ENCODE measurements at regions of chr5 and their contacts with region 1.

Region 1: GRCh38 chr5:140710899-140711552 is 10.8 kb downstream of the ZMAT2 start:
- DNase-seq: peak; percentile 93
- H3K4me3 Mint-ChIP-seq: peak overlapping the region; percentile 89
- H3K27ac Mint-ChIP-seq: peak overlapping the region; percentile 89
- H3K4me1 Mint-ChIP-seq: peaks cover 12% of the 10 kb centered on the region
- H3K27me3 Mint-ChIP-seq: no peaks in the 10 kb centered on the region

Region 2: DNA sequence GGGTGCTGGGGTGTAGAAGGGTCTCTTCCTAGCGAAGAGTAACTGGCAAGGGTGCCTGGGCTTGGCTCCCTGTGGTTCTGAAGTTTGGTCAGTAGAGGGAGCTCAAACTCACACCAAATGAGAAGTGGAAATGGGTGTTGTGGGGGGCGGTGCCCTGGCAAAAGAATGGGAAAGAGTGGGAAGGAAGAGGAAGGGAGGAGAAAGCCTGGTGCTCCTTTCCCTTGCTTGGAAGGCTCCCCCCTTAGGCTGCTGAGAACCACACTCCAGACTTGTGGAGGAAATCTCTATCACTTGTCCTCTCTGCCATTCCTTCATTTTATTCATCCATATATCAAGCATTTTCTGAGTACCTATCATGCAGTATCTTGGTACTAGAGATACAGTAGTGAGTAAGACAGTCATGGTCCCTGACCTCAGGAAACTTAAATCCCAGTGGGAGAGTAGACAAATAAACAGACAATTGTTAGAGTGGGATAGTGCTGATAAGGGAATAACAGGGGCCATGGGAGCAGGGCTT is 338.0 kb before region 1 on chr5:
- CTCF ChIA-PET with region 1: interaction called, 10 read pairs
- POLR2A ChIA-PET with region 1: no interaction called
- intact Hi-C with region 1: no loop called
- DNase-seq: peak; percentile 48
- H3K4me3 Mint-ChIP-seq: no peak overlapping the region
- H3K27ac Mint-ChIP-seq: no peak overlapping the region
- H3K4me1 Mint-ChIP-seq: peaks cover 3% of the 10 kb centered on the region
- H3K27me3 Mint-ChIP-seq: no peaks in the 10 kb centered on the region

Region 3: DNA sequence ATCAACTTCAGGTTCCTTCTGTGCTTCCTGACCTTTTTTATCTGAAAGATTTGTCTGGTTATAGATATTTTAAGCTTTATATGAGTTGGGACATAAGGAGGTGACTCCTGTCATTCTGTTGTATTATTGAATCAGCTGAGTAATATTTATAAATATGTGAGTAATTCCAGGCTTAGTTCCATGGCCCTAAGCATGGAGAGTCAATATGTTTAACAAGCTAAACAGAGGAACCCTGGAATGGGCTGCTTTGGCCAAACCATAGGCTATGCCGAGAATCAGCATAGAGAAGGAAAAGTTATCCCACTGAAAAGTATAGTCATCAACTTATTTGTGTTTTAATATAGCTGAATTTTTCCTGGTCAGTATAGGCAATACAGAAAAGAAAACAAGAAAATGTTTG is 170.8 kb before region 1 on chr5:
- CTCF ChIA-PET with region 1: no interaction called
- POLR2A ChIA-PET with region 1: no interaction called
- intact Hi-C with region 1: no loop called
- DNase-seq: no peak
- H3K4me3 Mint-ChIP-seq: no peak overlapping the region
- H3K27ac Mint-ChIP-seq: no peak overlapping the region
- H3K4me1 Mint-ChIP-seq: peaks cover 2% of the 10 kb centered on the region
- H3K27me3 Mint-ChIP-seq: no peaks in the 10 kb centered on the region

Region 4: DNA sequence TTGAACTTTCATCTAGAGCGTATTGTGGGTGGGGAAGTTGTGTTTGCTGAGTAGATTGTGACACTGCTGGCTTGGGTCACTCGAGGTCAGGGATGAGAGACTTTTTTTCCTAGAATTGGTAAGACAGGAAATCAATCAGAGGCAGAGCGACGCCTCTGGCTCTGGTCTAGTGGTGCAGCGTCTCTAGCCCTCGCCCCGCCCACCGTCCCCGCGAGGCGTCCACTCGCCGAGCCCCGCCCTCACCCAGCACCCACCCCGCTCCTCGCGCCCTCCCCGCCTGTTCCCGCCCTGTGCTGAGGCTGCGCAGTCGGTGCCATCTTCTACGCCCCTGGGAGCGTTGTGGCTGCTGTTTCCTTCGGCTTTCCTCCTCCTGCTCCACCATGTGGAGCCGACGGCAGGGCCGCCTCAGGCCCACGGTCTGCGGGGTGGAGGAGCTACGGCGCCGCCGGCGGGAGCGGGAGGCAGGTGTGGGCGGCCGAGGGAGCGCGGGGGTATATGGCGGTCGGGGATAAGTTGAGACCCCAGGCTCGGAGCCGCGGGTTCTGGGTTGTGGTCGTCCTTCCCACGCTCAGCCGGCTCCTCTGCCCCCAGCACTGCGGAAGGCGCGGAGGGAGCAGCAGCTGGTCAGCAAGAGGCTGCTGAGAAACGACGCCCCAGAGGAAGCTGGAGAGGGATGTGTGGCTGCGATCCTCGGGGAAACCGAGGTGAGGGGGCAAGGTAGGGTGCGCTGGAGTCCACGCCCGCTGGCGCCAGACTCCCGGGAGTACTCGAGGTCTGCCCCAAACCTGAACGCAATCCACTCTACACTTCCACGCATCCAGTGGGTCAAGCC is 71.7 kb before region 1 on chr5 and contains the start of gene TMCO6:
- CTCF ChIA-PET with region 1: interaction called, 3 read pairs
- POLR2A ChIA-PET with region 1: no interaction called
- intact Hi-C with region 1: loop called (anchors 1 kb)
- DNase-seq: peak; percentile 99
- H3K4me3 Mint-ChIP-seq: peak within 1 kb of the TSS; percentile 85
- H3K27ac Mint-ChIP-seq: peak within 1 kb of the TSS; percentile 94
- H3K4me1 Mint-ChIP-seq: peaks cover 41% of the 10 kb centered on the region
- H3K27me3 Mint-ChIP-seq: no peaks in the 10 kb centered on the region
- total RNA-seq, gene TMCO6: 33.7 to 33.8 TPM

Region 5: DNA sequence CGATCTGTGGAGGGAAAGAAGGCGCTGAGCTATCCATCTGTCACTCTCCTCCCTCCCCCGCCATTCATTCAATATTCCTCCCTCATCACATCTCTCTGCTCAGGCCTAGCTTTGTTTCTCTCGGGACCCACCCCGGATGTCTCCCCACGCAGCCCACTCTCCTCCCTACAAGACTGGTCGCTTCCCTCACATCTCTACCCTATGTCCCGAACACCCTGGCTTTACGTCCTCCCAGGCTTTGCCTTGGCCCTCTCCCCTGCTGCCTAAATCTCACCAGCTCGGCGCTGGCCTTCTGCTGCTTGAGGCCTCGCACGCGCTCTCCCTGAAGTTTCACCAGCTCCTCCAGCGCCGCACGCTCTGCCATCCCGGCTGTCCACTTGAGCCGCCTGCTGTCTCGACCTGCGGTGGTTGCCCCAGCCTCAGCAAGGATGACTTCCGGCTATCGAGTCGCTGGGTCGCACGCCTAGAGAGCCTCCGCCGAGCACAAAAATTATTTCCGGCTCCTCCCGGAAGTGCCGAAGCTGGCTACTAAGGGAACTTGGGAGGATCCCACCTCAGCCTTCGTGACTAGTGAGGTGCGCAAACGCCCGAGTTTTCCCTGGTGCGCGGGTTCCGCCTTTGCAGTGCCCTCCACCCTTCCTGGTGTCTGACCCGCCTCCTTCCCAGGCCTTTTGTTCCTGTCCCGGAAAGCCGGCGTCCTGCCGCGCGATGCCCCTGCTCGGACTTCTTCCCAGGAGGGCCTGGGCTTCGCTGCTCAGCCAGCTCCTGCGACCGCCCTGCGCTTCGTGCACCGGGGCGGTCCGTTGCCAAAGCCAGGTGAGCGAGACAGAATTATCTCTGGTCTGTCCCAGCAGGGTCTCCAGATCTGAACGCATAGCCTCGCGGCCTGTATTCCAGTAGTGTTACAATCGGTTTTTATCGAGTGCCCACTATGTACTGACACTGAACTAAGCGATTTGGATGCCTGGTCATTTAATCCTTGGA is 19.8 kb before region 1 on chr5 and contains the starts of genes HARS1 and HARS2:
- CTCF ChIA-PET with region 1: interaction called, 3 read pairs
- POLR2A ChIA-PET with region 1: interaction called, 10 read pairs
- intact Hi-C with region 1: loop called (anchors 1 kb)
- DNase-seq: peak; percentile 92
- H3K4me3 Mint-ChIP-seq: peak within 1 kb of the TSS; percentile 100
- H3K27ac Mint-ChIP-seq: peak within 1 kb of the TSS; percentile 99
- H3K4me1 Mint-ChIP-seq: peaks cover 40% of the 10 kb centered on the region
- H3K27me3 Mint-ChIP-seq: no peaks in the 10 kb centered on the region
- total RNA-seq, gene HARS1: 91.1 to 91.7 TPM
- total RNA-seq, gene HARS2: 26.9 to 28.9 TPM

Region 6: DNA sequence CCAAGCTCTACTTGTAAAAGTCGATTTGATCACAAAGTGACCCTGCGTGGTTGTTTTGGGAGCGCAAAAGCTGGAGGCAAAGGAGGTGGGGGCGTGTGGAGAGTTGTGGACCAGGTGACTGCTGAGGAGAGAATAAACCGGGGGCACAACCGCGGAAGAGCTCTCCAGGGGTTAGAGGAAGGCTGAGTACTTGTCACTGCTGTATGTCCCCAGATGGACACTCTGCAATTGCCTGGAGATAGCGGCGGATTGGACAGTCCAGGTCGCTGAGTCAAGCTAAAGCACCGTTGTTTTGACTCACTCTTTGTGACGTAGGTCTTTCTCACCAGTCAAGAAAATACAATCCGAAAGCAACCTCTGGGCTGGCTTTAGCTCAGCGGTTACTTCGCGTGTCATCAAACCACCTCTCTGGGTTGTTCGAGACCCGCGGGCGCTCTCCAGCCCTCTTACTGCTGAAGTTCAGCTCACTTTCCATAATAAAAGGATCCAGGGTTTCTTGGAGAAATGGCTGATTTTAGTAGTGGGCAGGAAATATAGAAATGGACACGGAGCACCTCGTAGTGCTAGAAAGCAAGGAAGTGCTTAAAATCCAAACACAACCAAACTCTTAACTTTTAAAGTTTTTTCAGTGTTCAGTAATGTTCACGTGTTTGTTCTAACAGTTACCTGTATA is 14.9 kb after region 1 on chr5:
- CTCF ChIA-PET with region 1: interaction called, 8 read pairs
- POLR2A ChIA-PET with region 1: interaction called, 8 read pairs
- intact Hi-C with region 1: loop called (anchors 1 kb)
- DNase-seq: peak; percentile 90
- H3K4me3 Mint-ChIP-seq: peak overlapping the region; percentile 80
- H3K27ac Mint-ChIP-seq: peak overlapping the region; percentile 79
- H3K4me1 Mint-ChIP-seq: peaks cover 8% of the 10 kb centered on the region
- H3K27me3 Mint-ChIP-seq: peaks cover 18% of the 10 kb centered on the region